ENCODE measurements at regions of chr20 and their contacts with region 1.

Region 1: DNA sequence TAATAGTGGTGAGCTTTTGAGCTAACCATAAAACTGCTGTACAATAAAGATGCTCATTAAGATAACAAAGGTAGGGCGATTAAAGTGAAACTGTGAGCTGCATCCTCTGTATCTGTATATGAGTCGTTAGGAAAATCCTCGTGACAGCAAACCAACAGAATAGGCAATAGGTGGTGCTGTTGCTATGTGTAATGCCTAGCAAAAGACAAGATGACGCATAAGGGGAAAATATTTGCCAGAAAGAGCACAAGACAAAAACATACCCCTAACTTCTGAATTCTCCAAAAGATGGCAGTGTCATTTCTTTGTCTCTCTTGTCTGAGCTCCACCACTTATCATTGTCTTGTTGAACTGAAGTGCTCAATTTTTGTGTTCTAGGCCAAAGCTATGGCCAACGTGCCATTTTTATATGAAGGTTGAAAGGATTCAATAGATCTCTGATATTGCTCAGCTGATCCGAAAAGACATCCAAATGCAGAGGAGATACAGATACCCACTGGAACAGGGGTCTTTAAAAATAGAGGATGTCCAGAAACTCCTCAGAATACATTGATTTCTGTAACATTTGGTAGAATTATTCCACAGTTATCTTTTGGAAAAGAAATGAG is 56.3 kb upstream of the ANKEF1 start:
- DNase-seq: peak; percentile 38
- ATAC-seq: peak; percentile 95
- H3K4me3 Mint-ChIP-seq: no peak overlapping the region
- H3K27ac Mint-ChIP-seq: no peak overlapping the region
- H3K4me1 Mint-ChIP-seq: peaks cover 2% of the 10 kb centered on the region
- H3K27me3 Mint-ChIP-seq: peaks cover 1% of the 10 kb centered on the region

Region 2: GRCh38 chr20:9235518-9235917 is 743.0 kb before region 1 on chr20:
- CTCF ChIA-PET with region 1: no interaction called
- POLR2A ChIA-PET with region 1: no interaction called
- intact Hi-C with region 1: no loop called
- DNase-seq: no peak
- ATAC-seq: no peak
- H3K4me3 Mint-ChIP-seq: no peak overlapping the region
- H3K27ac Mint-ChIP-seq: no peak overlapping the region
- H3K4me1 Mint-ChIP-seq: no peaks in the 10 kb centered on the region
- H3K27me3 Mint-ChIP-seq: no peaks in the 10 kb centered on the region

Region 3: DNA sequence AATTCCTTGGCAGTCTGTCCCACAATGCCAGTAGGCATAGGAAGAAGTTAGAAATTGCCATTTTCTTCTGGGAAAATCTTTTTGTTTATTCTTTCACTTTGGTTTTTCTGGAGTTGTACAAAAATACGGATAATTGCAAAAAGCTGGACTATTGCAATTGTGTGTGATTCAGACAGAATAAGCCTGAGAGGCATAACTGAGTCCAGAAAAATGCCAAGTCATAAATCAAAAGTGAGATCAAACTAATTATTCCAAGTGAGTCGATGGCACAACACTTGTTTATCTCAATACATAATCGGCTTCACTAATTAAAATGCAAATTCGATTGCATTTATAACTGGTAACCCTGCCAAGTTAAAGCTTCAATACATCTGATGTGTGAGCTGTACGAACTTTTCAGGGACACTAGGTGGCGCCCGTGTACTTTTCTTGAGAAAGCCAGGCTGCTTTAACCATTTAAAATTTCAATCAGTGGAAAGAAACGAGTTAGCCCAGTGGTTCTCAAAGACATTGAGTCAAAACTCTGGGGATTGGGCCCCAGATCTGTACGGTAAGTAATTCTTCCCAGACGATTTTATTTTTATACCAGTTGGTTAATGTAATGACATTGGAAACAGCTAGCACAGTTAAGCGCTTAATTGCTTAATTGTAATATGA is 361.5 kb before region 1 on chr20:
- CTCF ChIA-PET with region 1: interaction called, 5 read pairs
- POLR2A ChIA-PET with region 1: no interaction called
- intact Hi-C with region 1: loop called in 1 of 2 experiments (anchors 5 kb)
- DNase-seq: peak; percentile 76
- ATAC-seq: peak; percentile 68
- H3K4me3 Mint-ChIP-seq: no peak overlapping the region
- H3K27ac Mint-ChIP-seq: no peak overlapping the region
- H3K4me1 Mint-ChIP-seq: no peaks in the 10 kb centered on the region
- H3K27me3 Mint-ChIP-seq: peaks cover 11% of the 10 kb centered on the region

Region 4: GRCh38 chr20:9877932-9878495 is 100.5 kb before region 1 on chr20:
- CTCF ChIA-PET with region 1: no interaction called
- POLR2A ChIA-PET with region 1: no interaction called
- intact Hi-C with region 1: no loop called
- DNase-seq: no peak
- ATAC-seq: no peak
- H3K4me3 Mint-ChIP-seq: no peak overlapping the region
- H3K27ac Mint-ChIP-seq: no peak overlapping the region
- H3K4me1 Mint-ChIP-seq: no peaks in the 10 kb centered on the region
- H3K27me3 Mint-ChIP-seq: peaks cover under 1% of the 10 kb centered on the region

Region 5: DNA sequence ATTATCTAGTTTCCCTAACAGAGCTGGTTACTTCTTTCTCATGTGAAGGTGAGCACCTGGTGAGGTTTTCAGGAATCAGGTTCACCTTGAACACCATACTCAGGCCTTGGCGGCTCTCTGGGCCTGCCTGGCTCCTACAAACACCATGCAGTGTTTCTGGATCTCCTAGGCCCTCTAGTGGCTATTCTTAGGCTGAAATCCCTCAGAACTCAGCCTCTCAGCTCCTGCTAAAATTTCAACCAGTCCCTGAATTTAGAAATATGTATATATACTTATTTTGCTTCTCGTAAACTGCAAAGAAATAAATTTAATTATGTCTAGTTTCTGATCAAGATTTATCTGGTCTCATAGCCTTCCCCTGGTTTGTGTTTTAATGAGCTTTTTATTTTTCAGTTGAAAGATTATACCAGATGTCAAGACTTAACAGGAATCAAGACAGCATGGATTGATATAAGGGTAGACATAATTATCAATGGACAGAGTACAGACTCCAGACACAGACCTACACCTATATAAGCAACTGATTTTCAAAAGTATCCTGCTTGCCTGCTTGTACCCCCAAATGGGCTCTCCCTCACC is 112.2 kb after region 1 on chr20:
- CTCF ChIA-PET with region 1: interaction called, 84 read pairs
- POLR2A ChIA-PET with region 1: no interaction called
- intact Hi-C with region 1: loop called (anchors 1 kb)
- DNase-seq: peak; percentile 37
- ATAC-seq: peak; percentile 63
- H3K4me3 Mint-ChIP-seq: no peak overlapping the region
- H3K27ac Mint-ChIP-seq: no peak overlapping the region
- H3K4me1 Mint-ChIP-seq: no peaks in the 10 kb centered on the region
- H3K27me3 Mint-ChIP-seq: peaks cover 3% of the 10 kb centered on the region

Region 6: DNA sequence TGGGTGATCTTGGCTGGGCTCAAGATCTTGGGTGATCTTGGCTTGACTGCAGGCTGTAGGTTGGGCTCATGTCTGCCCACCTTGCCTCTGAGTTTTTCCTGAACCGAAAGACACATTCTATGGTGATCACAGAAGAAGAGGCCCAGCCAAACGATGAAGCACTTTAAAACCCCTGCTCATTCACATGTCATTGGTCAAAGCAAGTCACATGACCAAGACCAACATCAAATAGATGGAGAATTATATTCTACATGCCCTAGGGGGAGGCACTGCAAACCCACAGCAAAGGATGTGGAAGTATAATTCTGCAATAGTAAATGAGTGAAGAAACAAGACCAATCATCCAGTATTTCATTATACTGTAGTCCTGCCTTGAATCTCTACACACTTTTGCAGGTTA is 164.1 kb after region 1 on chr20:
- CTCF ChIA-PET with region 1: no interaction called
- POLR2A ChIA-PET with region 1: no interaction called
- intact Hi-C with region 1: no loop called
- DNase-seq: no peak
- ATAC-seq: no peak
- H3K4me3 Mint-ChIP-seq: no peak overlapping the region
- H3K27ac Mint-ChIP-seq: no peak overlapping the region
- H3K4me1 Mint-ChIP-seq: no peaks in the 10 kb centered on the region
- H3K27me3 Mint-ChIP-seq: peaks cover 14% of the 10 kb centered on the region

Region 7: DNA sequence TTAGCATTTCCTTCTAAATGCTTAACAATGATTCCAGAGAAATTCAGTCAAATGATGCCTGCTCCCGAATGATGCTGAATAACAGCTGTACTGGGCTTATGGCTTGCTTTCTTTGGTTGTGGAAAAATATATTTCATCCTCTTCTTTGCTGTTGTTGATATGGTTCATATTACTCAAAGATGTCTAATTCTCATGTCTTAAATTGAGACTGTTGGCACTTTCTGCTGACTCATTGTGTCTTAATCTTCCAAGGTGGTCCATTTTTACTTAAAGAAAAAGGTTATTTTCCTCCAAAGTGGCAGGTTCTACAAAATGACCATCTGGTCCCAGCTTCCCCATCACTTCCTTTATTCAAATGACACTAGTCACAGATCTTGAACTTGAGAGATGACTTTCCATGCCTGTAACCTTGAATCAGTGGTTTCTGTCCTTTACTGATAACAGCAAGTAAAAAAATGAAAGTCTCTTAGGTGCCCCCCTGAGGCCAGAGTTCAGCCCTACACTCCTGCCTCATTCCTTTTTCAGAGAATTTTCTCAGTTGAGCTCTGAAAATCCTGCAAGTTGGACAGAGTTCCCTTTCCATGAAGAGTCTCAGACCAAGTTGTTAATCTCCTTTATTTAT is 247.0 kb after region 1 on chr20:
- CTCF ChIA-PET with region 1: no interaction called
- POLR2A ChIA-PET with region 1: no interaction called
- intact Hi-C with region 1: loop called in 1 of 2 experiments (anchors 10 kb)
- DNase-seq: no peak
- ATAC-seq: peak; percentile 49
- H3K4me3 Mint-ChIP-seq: no peak overlapping the region
- H3K27ac Mint-ChIP-seq: no peak overlapping the region
- H3K4me1 Mint-ChIP-seq: no peaks in the 10 kb centered on the region
- H3K27me3 Mint-ChIP-seq: peaks cover 22% of the 10 kb centered on the region

Region 8: GRCh38 chr20:10381493-10381892 is 403.0 kb after region 1 on chr20:
- CTCF ChIA-PET with region 1: interaction called, 3 read pairs
- POLR2A ChIA-PET with region 1: no interaction called
- intact Hi-C with region 1: loop called in 1 of 2 experiments (anchors 2 kb)
- DNase-seq: no peak
- ATAC-seq: no peak
- H3K4me3 Mint-ChIP-seq: no peak overlapping the region
- H3K27ac Mint-ChIP-seq: no peak overlapping the region
- H3K4me1 Mint-ChIP-seq: no peaks in the 10 kb centered on the region
- H3K27me3 Mint-ChIP-seq: peaks cover 16% of the 10 kb centered on the region

Region 9: DNA sequence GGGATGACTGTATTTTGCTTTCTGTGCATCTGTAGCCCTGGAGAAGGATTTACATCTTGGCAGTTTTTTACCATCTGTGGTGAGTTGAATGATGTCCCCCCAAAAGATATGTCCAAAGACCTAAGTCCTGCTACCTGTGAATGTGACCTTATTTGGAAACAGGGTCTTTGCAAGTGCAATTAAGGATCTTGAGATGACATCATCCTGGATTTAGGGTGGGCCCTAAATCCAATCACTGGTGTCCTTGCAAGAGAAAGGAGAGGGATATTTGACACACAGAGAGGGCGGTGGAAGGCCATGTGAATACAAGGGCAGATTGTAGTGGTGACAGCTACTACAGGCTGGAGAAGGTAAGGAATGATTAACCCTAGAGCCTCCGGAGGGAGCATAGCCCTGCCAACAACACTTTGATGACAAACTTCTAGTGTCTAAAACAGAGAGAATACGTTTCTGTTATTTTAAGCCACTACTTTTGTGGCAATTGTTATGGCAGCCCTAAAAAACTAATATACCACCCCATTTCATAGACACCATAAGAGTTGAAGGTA is 420.4 kb after region 1 on chr20:
- CTCF ChIA-PET with region 1: no interaction called
- POLR2A ChIA-PET with region 1: no interaction called
- intact Hi-C with region 1: no loop called
- DNase-seq: no peak
- ATAC-seq: no peak
- H3K4me3 Mint-ChIP-seq: no peak overlapping the region
- H3K27ac Mint-ChIP-seq: no peak overlapping the region
- H3K4me1 Mint-ChIP-seq: peaks cover 6% of the 10 kb centered on the region
- H3K27me3 Mint-ChIP-seq: no peaks in the 10 kb centered on the region

Region 10: DNA sequence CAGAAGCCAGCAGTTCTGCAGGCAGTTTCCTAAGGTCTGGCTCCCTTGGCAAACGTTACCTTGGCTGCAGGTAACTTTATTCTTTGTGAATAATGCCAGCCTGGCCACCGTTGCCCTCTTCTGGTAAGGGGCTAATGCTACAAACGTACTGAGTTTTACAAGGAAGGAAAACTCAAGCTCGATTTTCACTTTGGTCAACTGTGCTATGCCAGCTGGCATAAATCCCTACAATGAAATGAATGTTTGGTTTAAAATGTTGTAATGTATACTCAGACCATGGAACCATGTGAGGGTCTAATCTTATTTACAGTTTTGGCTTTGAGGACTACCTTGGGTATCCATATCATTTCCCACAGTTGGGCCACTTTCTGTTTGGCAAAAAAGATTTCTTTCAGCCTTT is 558.0 kb after region 1 on chr20:
- CTCF ChIA-PET with region 1: no interaction called
- POLR2A ChIA-PET with region 1: no interaction called
- intact Hi-C with region 1: loop called (anchors 5 kb)
- DNase-seq: peak; percentile 51
- ATAC-seq: peak; percentile 30
- H3K4me3 Mint-ChIP-seq: no peak overlapping the region
- H3K27ac Mint-ChIP-seq: no peak overlapping the region
- H3K4me1 Mint-ChIP-seq: peaks cover 17% of the 10 kb centered on the region
- H3K27me3 Mint-ChIP-seq: no peaks in the 10 kb centered on the region

Region 11: DNA sequence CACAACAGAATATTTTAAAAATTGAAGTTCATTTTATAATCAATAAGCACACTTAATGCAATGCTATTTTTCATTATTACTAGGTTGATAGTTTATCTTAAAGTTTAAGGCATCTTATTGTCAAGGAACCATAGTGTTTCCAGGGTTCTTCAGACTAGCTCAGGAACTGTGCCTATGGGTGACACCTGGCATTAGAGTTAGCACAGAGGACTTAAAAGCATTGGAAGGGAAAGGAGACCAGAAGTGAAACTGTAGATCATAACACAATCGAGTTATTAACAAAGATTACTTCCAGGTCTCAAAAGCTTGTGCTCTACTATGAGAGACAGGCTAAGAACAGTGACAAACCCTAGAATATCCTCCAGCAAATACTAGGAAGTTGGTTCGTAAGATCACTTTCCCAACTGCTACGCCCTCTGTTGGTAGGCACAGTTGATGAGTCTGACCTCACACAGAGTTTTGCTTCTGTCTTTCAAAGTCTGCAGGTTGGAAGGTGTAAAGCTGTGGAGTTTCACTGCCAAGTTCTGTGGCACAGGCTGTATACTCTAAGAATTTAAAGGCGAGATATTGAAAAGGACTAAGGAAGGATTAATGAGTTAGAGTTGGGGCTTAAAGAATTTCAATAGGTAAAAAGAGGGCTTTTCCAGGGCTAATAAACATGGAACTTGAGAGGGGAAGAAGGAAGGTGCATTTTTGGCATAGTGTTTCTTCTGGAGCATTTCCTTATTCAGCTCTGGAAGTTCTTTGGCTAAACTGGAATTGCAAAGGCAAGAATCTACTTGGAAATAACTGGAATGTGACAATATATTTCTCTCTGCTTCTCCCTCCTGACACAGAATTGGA is 1226.6 kb after region 1 on chr20:
- CTCF ChIA-PET with region 1: no interaction called
- POLR2A ChIA-PET with region 1: no interaction called
- intact Hi-C with region 1: loop called in 1 of 2 experiments (anchors 5 kb)
- DNase-seq: peak; percentile 41
- ATAC-seq: peak; percentile 60
- H3K4me3 Mint-ChIP-seq: no peak overlapping the region
- H3K27ac Mint-ChIP-seq: no peak overlapping the region
- H3K4me1 Mint-ChIP-seq: peaks cover 3% of the 10 kb centered on the region
- H3K27me3 Mint-ChIP-seq: peaks cover under 1% of the 10 kb centered on the region

Measured in activated CD4-positive, alpha-beta T cell treated with anti-CD3 and anti-CD28 coated beads for 36 hours (primary cell).